ENCODE measurements at regions of chr1 and their contacts with region 1.

Region 1: GRCh38 chr1:44652445-44653106 is 21.7 kb downstream of the TMEM53 start:
- DNase-seq: peak; percentile 79
- ATAC-seq: peak; percentile 94
- H3K4me3 ChIP-seq: no peak overlapping the region
- H3K4me3 Mint-ChIP-seq: no peak overlapping the region
- H3K27ac ChIP-seq: peak overlapping the region in 1 of 2 donors; percentile 8
- H3K27ac Mint-ChIP-seq: no peak overlapping the region
- H3K4me1 ChIP-seq: no peaks in the 10 kb centered on the region
- H3K4me1 Mint-ChIP-seq: no peaks in the 10 kb centered on the region
- H3K27me3 ChIP-seq: no peaks in the 10 kb centered on the region
- H3K27me3 Mint-ChIP-seq: no peaks in the 10 kb centered on the region
- CTCF ChIP-seq: peak; percentile 98

Region 2: GRCh38 chr1:44213222-44214112 is 439.1 kb before region 1 on chr1 and contains the start of gene DMAP1:
- CTCF ChIA-PET with region 1: interaction called, 28 read pairs
- POLR2A ChIA-PET with region 1: no interaction called
- intact Hi-C with region 1: no loop called
- DNase-seq: peak; percentile 92
- ATAC-seq: peak; percentile 81
- H3K4me3 ChIP-seq: peak within 1 kb of the TSS; percentile 77 to 95 (median 84)
- H3K4me3 Mint-ChIP-seq: peak within 1 kb of the TSS; percentile 97
- H3K27ac ChIP-seq: peak within 1 kb of the TSS; percentile 45 to 53
- H3K27ac Mint-ChIP-seq: peak within 1 kb of the TSS; percentile 93
- H3K4me1 ChIP-seq: peaks cover 16 to 17% of the 10 kb centered on the region in 2 donors
- H3K4me1 Mint-ChIP-seq: peaks cover 32% of the 10 kb centered on the region
- H3K27me3 ChIP-seq: no peaks in the 10 kb centered on the region
- H3K27me3 Mint-ChIP-seq: no peaks in the 10 kb centered on the region
- CTCF ChIP-seq: no peak
- total RNA-seq, gene DMAP1: 88.5 and 95.5 TPM in 2 replicates

Region 3: GRCh38 chr1:44571712-44572571 is 80.6 kb before region 1 on chr1:
- CTCF ChIA-PET with region 1: interaction called, 91 read pairs
- POLR2A ChIA-PET with region 1: no interaction called
- intact Hi-C with region 1: loop called (anchors 1 kb)
- DNase-seq: peak; percentile 46
- ATAC-seq: no peak
- H3K4me3 ChIP-seq: no peak overlapping the region
- H3K4me3 Mint-ChIP-seq: no peak overlapping the region
- H3K27ac ChIP-seq: no peak overlapping the region
- H3K27ac Mint-ChIP-seq: no peak overlapping the region
- H3K4me1 ChIP-seq: no peaks in the 10 kb centered on the region
- H3K4me1 Mint-ChIP-seq: no peaks in the 10 kb centered on the region
- H3K27me3 ChIP-seq: peaks cover 0 to 4% (median 0%) of the 10 kb centered on the region in 4 experiments
- H3K27me3 Mint-ChIP-seq: peaks cover 36% of the 10 kb centered on the region
- CTCF ChIP-seq: peak; percentile 65

Region 4: GRCh38 chr1:44609412-44609767 is 43.2 kb before region 1 on chr1:
- CTCF ChIA-PET with region 1: interaction called, 65 read pairs
- POLR2A ChIA-PET with region 1: interaction called, 3 read pairs
- intact Hi-C with region 1: loop called (anchors 1 kb)
- DNase-seq: peak; percentile 33
- ATAC-seq: no peak
- H3K4me3 ChIP-seq: no peak overlapping the region
- H3K4me3 Mint-ChIP-seq: no peak overlapping the region
- H3K27ac ChIP-seq: no peak overlapping the region
- H3K27ac Mint-ChIP-seq: no peak overlapping the region
- H3K4me1 ChIP-seq: no peaks in the 10 kb centered on the region
- H3K4me1 Mint-ChIP-seq: no peaks in the 10 kb centered on the region
- H3K27me3 ChIP-seq: no peaks in the 10 kb centered on the region
- H3K27me3 Mint-ChIP-seq: peaks cover 11% of the 10 kb centered on the region
- CTCF ChIP-seq: peak; percentile 20

Region 5: DNA sequence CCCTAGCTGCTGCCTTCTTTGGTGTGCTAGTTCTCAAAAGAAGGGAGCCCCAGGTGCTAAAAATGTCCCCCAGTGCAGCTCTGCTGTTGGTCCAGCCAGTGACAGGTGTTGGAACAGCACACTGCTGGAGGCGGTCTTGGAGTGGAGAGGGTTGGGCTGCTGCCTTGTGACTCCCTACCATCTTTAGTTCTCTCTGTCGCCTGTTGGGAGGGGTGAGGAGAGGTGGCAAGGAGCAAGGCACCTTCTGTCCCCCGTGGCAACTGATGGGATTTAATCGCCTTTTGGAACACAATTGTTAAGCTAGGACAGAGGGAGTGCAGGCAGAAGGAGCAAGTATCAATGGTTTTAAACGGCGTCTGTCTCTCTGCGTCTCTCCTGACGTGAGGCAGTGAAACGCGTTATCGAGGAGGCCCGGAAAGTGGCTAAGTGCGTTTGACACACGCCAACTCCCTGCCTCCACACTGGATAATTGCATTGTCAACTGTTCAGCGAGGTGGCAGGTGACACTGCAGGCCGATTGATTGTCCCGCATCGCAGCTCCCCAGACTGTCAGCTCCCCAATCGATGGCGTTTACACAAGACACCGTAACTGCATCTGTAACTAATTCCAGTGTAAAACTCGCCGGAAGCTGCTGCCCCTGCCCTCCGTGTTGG is 12.2 kb before region 1 on chr1:
- CTCF ChIA-PET with region 1: interaction called, 39 read pairs
- POLR2A ChIA-PET with region 1: no interaction called
- intact Hi-C with region 1: no loop called
- DNase-seq: no peak
- ATAC-seq: no peak
- H3K4me3 ChIP-seq: no peak overlapping the region
- H3K4me3 Mint-ChIP-seq: no peak overlapping the region
- H3K27ac ChIP-seq: no peak overlapping the region
- H3K27ac Mint-ChIP-seq: no peak overlapping the region
- H3K4me1 ChIP-seq: no peaks in the 10 kb centered on the region
- H3K4me1 Mint-ChIP-seq: peaks cover 5% of the 10 kb centered on the region
- H3K27me3 ChIP-seq: no peaks in the 10 kb centered on the region
- H3K27me3 Mint-ChIP-seq: no peaks in the 10 kb centered on the region
- CTCF ChIP-seq: no peak

Region 6: DNA sequence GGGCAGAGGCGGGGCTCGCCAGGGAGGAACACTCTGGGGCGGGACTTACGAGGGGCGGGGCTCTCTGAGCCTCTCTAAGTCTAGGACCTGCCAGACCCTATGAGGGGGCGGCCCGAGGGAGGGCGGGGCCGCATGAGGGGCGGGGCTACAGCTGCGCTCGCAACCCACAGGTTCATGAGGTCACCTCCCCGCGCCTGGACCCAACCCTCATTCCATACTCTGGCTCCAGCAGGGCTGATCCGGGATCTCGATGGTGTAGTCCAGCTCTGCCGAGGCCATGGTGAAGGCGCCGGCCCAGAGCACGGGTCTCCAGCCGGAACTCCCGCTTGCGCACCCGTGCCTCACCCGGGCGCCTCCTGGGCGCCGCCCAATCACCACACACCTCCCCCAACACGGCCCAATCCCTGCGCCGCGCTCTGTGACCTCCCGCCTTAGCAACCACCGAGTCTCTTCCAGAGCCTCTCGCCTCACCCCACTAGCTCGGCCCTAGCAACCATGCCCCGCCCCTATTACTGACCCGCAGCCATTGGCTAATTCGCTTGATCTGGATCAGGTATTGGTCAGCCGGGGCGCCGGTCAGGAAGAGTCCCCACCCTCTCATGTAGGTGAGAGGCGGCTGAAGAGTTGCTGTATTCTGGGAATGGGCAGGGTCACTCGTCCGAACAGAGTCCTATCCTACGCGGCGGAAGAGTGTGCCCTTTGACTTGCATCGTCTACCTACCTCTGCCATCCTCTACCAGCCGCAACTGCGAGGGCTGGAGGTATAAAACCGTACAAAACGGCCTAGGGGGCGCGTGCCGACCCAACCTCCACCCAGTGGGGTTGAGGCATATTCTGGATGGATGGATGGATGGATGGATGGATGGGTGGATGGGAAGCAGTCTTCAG is 21.8 kb after region 1 on chr1 and contains the starts of genes ARMH1 and TMEM53:
- CTCF ChIA-PET with region 1: interaction called, 33 read pairs
- POLR2A ChIA-PET with region 1: interaction called, 3 read pairs
- intact Hi-C with region 1: no loop called
- DNase-seq: peak; percentile 99
- ATAC-seq: peak; percentile 91
- H3K4me3 ChIP-seq: peak within 1 kb of the TSS; percentile 70 to 88 (median 84)
- H3K4me3 Mint-ChIP-seq: peak within 1 kb of the TSS; percentile 91
- H3K27ac ChIP-seq: peak within 1 kb of the TSS; percentile 87 to 94
- H3K27ac Mint-ChIP-seq: peak within 1 kb of the TSS; percentile 96
- H3K4me1 ChIP-seq: peaks cover 34 to 50% of the 10 kb centered on the region in 2 donors
- H3K4me1 Mint-ChIP-seq: peaks cover 35% of the 10 kb centered on the region
- H3K27me3 ChIP-seq: no peaks in the 10 kb centered on the region
- H3K27me3 Mint-ChIP-seq: no peaks in the 10 kb centered on the region
- CTCF ChIP-seq: no peak
- total RNA-seq, gene ARMH1: 10.2 and 11.4 TPM in 2 replicates
- total RNA-seq, gene TMEM53: 5.3 and 6.8 TPM in 2 replicates